ENCODE measurements at regions of chr7 and their contacts with region 1.

Region 1: GRCh38 chr7:116588641-116589594 is 64.1 kb downstream of the CAV1 start:
- DNase-seq: no peak
- ATAC-seq: peak; percentile 59 to 64
- H3K4me3 ChIP-seq: no peak overlapping the region
- H3K27ac ChIP-seq: peak overlapping the region; percentile 25
- H3K4me1 ChIP-seq: peaks cover 38% of the 10 kb centered on the region
- H3K27me3 ChIP-seq: no peaks in the 10 kb centered on the region
- CTCF ChIP-seq: peak; percentile 69

Region 2: GRCh38 chr7:116809636-116810266 is 220.8 kb after region 1 on chr7:
- intact Hi-C with region 1: loop called (anchors 5 kb)
- DNase-seq: no peak
- ATAC-seq: peak; percentile 82 to 89
- H3K4me3 ChIP-seq: no peak overlapping the region
- H3K27ac ChIP-seq: no peak overlapping the region
- H3K4me1 ChIP-seq: peaks cover 16% of the 10 kb centered on the region
- H3K27me3 ChIP-seq: no peaks in the 10 kb centered on the region
- CTCF ChIP-seq: peak; percentile 65